ENCODE measurements at regions of chr5 and their contacts with region 1.

Region 1: DNA sequence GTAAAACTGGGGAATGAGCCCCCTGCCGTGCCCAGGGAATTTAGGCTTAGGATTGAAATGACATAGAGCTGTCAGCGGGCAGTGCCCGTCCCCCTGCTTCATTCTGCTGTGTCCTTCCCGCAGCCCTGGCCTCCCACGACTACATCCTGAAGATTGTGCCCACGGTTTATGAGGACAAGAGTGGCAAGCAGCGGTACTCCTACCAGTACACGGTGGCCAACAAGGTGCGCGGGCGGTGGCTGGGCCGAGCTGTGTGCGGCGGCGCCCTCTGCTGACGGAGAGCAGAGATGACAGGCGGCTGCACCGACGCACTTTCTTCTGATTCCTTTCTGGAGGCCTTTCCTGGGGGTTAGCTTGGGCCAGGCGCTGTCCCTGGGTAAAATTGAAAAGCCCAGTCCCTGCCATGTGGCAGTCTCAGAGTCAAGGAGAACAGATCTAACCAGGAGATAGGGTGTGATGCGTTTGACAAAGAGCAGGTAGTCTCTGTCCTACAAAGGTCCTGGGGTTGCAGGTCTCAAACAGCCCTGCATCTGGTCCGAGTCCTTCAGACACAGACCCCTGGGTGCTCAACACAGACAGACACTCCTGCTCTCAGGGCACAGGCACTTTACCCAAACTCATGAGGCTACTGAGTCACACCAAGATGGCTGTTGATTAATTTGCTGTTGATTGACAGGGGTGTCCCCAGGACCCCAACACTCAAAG is 26.8 kb upstream of the RPL26L1 start:
- DNase-seq: peak; percentile 54
- H3K4me3 ChIP-seq: no peak overlapping the region
- H3K27ac ChIP-seq: no peak overlapping the region
- H3K4me1 ChIP-seq: no peaks in the 10 kb centered on the region
- H3K27me3 ChIP-seq: no peaks in the 10 kb centered on the region
- CTCF ChIP-seq: peak; percentile 92

Region 2: GRCh38 chr5:172479044-172479783 is 453.3 kb before region 1 on chr5:
- CTCF ChIA-PET with region 1: no interaction called
- POLR2A ChIA-PET with region 1: no interaction called
- intact Hi-C with region 1: loop called (anchors 10 kb)
- DNase-seq: peak; percentile 87
- H3K4me3 ChIP-seq: no peak overlapping the region
- H3K27ac ChIP-seq: no peak overlapping the region
- H3K4me1 ChIP-seq: no peaks in the 10 kb centered on the region
- H3K27me3 ChIP-seq: no peaks in the 10 kb centered on the region
- CTCF ChIP-seq: peak; percentile 66

Region 3: GRCh38 chr5:172714491-172715421 is 217.7 kb before region 1 on chr5:
- CTCF ChIA-PET with region 1: interaction called, 15 read pairs
- POLR2A ChIA-PET with region 1: no interaction called
- intact Hi-C with region 1: loop called (anchors 1 kb)
- DNase-seq: peak; percentile 69
- H3K4me3 ChIP-seq: no peak overlapping the region
- H3K27ac ChIP-seq: no peak overlapping the region
- H3K4me1 ChIP-seq: peaks cover 3% of the 10 kb centered on the region
- H3K27me3 ChIP-seq: no peaks in the 10 kb centered on the region
- CTCF ChIP-seq: peak; percentile 74

Region 4: GRCh38 chr5:172770675-172771438 is 161.6 kb before region 1 on chr5 and contains the start of gene DUSP1:
- CTCF ChIA-PET with region 1: interaction called, 5 read pairs
- POLR2A ChIA-PET with region 1: no interaction called
- intact Hi-C with region 1: loop called (anchors 5 kb)
- DNase-seq: peak; percentile 94
- H3K4me3 ChIP-seq: peak within 1 kb of the TSS; percentile 91
- H3K27ac ChIP-seq: peak within 1 kb of the TSS; percentile 99
- H3K4me1 ChIP-seq: peaks cover 42% of the 10 kb centered on the region
- H3K27me3 ChIP-seq: no peaks in the 10 kb centered on the region
- CTCF ChIP-seq: peak; percentile 30; the same call in 1 of the 2 replicates
- total RNA-seq, gene DUSP1: 11.3 and 13.1 TPM in 2 replicates

Region 5: DNA sequence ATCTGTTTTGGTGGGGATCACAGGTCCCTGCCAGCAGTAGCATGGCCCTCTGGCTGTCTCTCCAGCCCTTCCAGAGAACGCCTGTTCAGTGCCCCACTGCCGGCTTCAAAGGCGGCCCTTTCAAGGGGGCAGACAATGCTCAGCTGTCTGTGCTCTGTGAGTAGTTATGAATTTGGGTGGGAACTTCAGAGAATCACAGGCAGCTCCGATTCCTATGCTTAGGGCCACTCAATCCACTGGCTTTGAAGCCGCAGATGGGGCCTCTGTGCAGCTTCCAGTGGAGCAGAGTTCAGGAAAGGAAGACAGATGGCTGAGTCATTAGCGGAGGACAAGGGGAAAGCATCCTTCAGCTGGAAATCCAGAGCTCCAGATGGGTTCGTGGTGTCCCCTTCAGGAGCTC is 260.1 kb after region 1 on chr5:
- CTCF ChIA-PET with region 1: interaction called, 11 read pairs
- POLR2A ChIA-PET with region 1: no interaction called
- intact Hi-C with region 1: no loop called
- DNase-seq: no peak
- H3K4me3 ChIP-seq: no peak overlapping the region
- H3K27ac ChIP-seq: no peak overlapping the region
- H3K4me1 ChIP-seq: no peaks in the 10 kb centered on the region
- H3K27me3 ChIP-seq: no peaks in the 10 kb centered on the region
- CTCF ChIP-seq: no peak

Region 6: GRCh38 chr5:173204185-173204979 is 271.9 kb after region 1 on chr5:
- CTCF ChIA-PET with region 1: no interaction called
- POLR2A ChIA-PET with region 1: no interaction called
- intact Hi-C with region 1: no loop called
- DNase-seq: peak; percentile 24
- H3K4me3 ChIP-seq: no peak overlapping the region
- H3K27ac ChIP-seq: no peak overlapping the region
- H3K4me1 ChIP-seq: no peaks in the 10 kb centered on the region
- H3K27me3 ChIP-seq: no peaks in the 10 kb centered on the region
- CTCF ChIP-seq: peak; percentile 59